ENCODE measurements at regions of chr3 and their contacts with region 1.

Region 1: DNA sequence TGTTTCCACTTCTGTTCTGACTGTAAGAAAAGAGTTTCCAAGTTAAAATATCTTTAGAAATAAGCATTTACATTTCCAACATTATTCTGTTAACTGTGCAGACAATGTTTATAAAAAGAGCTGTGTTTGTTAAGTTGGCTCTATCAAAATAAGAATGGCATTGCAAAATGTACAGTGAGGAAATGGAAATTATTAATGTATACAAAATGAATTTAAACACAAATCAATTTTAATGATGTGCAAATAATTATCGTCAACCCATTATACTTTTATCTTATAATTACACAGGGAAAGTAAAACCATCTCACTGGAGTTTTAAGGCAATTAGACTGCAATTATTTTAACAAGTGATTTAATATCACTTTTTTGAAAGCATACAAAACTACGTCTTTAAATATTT is 17.5 kb downstream of the MRPS22 start:
- DNase-seq: no peak
- ATAC-seq: no peak
- H3K4me3 ChIP-seq: no peak overlapping the region
- H3K27ac ChIP-seq: no peak overlapping the region
- H3K4me1 ChIP-seq: peaks cover 0 to 7% (median 0%) of the 10 kb centered on the region in 9 donors
- H3K27me3 ChIP-seq: no peaks in the 10 kb centered on the region
- CTCF ChIP-seq: no peak

Region 2: GRCh38 chr3:138271189-138271794 is 1090.0 kb before region 1 on chr3:
- intact Hi-C with region 1: loop called in 1 of 10 experiments (anchors 5 kb)
- DNase-seq: no peak
- ATAC-seq: no peak
- H3K4me3 ChIP-seq: no peak overlapping the region
- H3K27ac ChIP-seq: no peak overlapping the region
- H3K4me1 ChIP-seq: no peaks in the 10 kb centered on the region
- H3K27me3 ChIP-seq: no peaks in the 10 kb centered on the region
- CTCF ChIP-seq: no peak